HEK293 (cell line): ENCODE measurements at regions of chr17 and their contacts with region 1.

Region 1: GRCh38 chr17:10295728-10296343 is 77.0 kb downstream of the MYH13 start:
- H3K4me3 ChIP-seq: no peak overlapping the region
- H3K27ac ChIP-seq: no peak overlapping the region
- H3K4me1 ChIP-seq: no peaks in the 10 kb centered on the region
- CTCF ChIP-seq: peak; percentile 64; the same call in 1 of the 2 replicates

Region 2: DNA sequence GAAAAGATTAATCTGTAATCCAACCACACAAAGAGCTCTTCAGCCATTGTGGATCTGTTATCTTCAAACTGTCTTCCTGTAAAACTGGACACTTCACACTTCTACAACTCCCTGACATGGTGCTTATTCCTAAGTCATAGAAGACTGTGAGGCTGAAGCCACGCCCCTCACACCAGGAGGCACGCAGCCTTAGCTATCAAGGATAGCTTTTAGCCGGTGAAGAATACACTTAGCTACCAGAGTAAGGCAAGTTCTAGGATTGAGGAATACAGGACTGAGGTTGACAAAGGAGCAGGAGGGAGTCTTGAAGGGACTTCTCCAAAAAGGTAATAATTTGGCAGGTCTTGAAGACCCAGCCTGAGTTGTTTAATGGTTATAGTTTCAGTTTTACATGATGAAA is 17.6 kb before region 1 on chr17:
- CTCF ChIA-PET with region 1: interaction called, 14 read pairs
- POLR2A ChIA-PET with region 1: no interaction called
- H3K4me3 ChIP-seq: no peak overlapping the region
- H3K27ac ChIP-seq: no peak overlapping the region
- H3K4me1 ChIP-seq: no peaks in the 10 kb centered on the region
- CTCF ChIP-seq: no peak

Region 3: DNA sequence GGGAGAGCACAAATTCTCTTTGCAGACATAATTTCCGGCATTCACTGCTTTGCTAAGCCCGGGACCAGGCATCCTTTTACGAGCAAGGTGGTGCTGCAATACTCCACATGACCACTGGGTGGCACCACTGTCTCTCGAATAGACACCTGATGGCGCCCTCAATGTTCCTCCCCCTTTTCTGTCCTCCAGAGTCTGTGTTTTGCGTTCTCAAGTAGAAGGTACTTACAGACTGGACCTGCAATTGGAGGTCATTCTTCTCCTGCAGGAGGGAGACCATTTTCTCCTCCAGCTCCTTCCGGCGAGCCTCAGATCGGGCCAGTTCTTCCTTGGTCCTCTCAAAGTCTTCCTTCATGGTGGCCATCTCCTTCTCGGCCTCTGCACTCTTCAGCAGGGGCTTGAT is 31.8 kb after region 1 on chr17:
- CTCF ChIA-PET with region 1: interaction called, 17 read pairs
- POLR2A ChIA-PET with region 1: no interaction called
- H3K4me3 ChIP-seq: no peak overlapping the region
- H3K27ac ChIP-seq: no peak overlapping the region
- H3K4me1 ChIP-seq: no peaks in the 10 kb centered on the region
- CTCF ChIP-seq: peak; percentile 78

Region 4: GRCh38 chr17:10384175-10384574 is 88.3 kb after region 1 on chr17:
- CTCF ChIA-PET with region 1: no interaction called
- POLR2A ChIA-PET with region 1: no interaction called
- H3K4me3 ChIP-seq: no peak overlapping the region
- H3K27ac ChIP-seq: no peak overlapping the region
- H3K4me1 ChIP-seq: no peaks in the 10 kb centered on the region
- CTCF ChIP-seq: no peak